PC-9 (cell line): ENCODE measurements at regions of chr20 and their contacts with region 1.

Region 1: GRCh38 chr20:956330-956951 is 40.3 kb upstream of the ANGPT4 start:
- DNase-seq: peak in 1 of 2 experiments; percentile 74
- H3K4me3 ChIP-seq: no peak overlapping the region
- H3K27ac ChIP-seq: no peak overlapping the region
- H3K4me1 ChIP-seq: no peaks in the 10 kb centered on the region
- H3K27me3 ChIP-seq: peaks cover 24% of the 10 kb centered on the region
- CTCF ChIP-seq: peak; percentile 99

Region 2: GRCh38 chr20:387520-387919 is 568.9 kb before region 1 on chr20:
- CTCF ChIA-PET with region 1: interaction called, 10 read pairs
- POLR2A ChIA-PET with region 1: no interaction called
- intact Hi-C with region 1: no loop called
- DNase-seq: no peak
- H3K4me3 ChIP-seq: no peak overlapping the region
- H3K27ac ChIP-seq: no peak overlapping the region
- H3K4me1 ChIP-seq: peaks cover 25% of the 10 kb centered on the region
- H3K27me3 ChIP-seq: no peaks in the 10 kb centered on the region
- CTCF ChIP-seq: no peak

Region 3: GRCh38 chr20:775679-776135 is 180.7 kb before region 1 on chr20:
- CTCF ChIA-PET with region 1: interaction called, 3 read pairs
- POLR2A ChIA-PET with region 1: interaction called, 12 read pairs
- intact Hi-C with region 1: no loop called
- DNase-seq: peak; percentile 82 to 83
- H3K4me3 ChIP-seq: peak overlapping the region; percentile 11; the same call in 1 of the 2 replicates
- H3K27ac ChIP-seq: no peak overlapping the region
- H3K4me1 ChIP-seq: peaks cover 32% of the 10 kb centered on the region
- H3K27me3 ChIP-seq: no peaks in the 10 kb centered on the region
- CTCF ChIP-seq: no peak

Region 4: DNA sequence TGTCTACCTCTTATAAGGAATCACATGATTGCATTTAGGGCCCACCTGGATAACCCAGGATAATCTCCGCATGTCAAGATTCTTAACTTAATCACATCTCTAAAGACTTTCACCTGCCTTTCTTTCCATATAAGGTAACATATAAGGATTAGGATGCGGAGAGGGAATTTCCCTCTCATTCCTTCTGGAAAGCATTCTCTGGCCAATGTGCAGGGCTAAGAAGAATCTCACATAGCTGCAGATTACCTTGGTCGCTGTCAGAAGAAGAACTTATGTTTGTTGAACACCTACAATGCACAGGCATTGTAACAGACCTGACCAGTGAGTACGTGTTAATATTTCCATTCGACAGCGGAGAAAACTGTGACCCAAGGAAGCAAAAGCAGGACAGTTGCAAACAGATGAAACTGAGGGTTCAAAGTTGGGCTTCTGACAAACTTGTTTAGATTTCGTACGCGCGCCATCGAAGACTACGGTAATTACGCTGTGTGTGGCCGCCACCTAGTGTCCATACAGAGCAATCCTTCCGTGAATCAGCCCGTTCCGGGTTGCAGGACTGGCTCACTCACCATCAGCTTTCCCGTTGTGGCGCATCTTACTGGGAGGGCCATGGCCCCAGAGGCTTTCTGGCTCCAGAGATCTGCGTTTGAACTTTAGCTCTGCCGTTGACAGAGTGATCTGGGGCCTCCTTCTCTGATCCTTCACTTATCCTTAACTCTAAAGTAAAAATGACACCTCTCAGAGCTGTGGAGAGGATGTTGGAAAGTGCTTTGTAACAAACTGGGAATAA is 256.4 kb after region 1 on chr20:
- CTCF ChIA-PET with region 1: no interaction called
- POLR2A ChIA-PET with region 1: no interaction called
- intact Hi-C with region 1: loop called (anchors 5 kb)
- DNase-seq: peak in 1 of 2 experiments; percentile 61
- H3K4me3 ChIP-seq: no peak overlapping the region
- H3K27ac ChIP-seq: no peak overlapping the region
- H3K4me1 ChIP-seq: no peaks in the 10 kb centered on the region
- H3K27me3 ChIP-seq: peaks cover 77% of the 10 kb centered on the region
- CTCF ChIP-seq: peak; percentile 82